ENCODE measurements at regions of chr10 and their contacts with region 1.

Region 1: GRCh38 chr10:99872367-99873162 is 90.1 kb downstream of the ABCC2 start:
- DNase-seq: no peak
- H3K4me3 ChIP-seq: no peak overlapping the region
- H3K27ac ChIP-seq: no peak overlapping the region
- H3K4me1 ChIP-seq: no peaks in the 10 kb centered on the region
- H3K27me3 ChIP-seq: no peaks in the 10 kb centered on the region
- CTCF ChIP-seq: no peak

Region 2: GRCh38 chr10:100359030-100359432 is 486.5 kb after region 1 on chr10:
- CTCF ChIA-PET with region 1: no interaction called
- POLR2A ChIA-PET with region 1: interaction called, 15 read pairs
- intact Hi-C with region 1: no loop called
- DNase-seq: no peak
- H3K4me3 ChIP-seq: no peak overlapping the region
- H3K27ac ChIP-seq: 0 out of 2 replicates have a peak overlapping the region, but pooled peaks have one; percentile 6
- H3K4me1 ChIP-seq: peaks cover 18% of the 10 kb centered on the region
- H3K27me3 ChIP-seq: no peaks in the 10 kb centered on the region
- CTCF ChIP-seq: no peak

Measured in PC-9 (cell line).